ENCODE measurements at regions of chr13 and their contacts with region 1.

Region 1: DNA sequence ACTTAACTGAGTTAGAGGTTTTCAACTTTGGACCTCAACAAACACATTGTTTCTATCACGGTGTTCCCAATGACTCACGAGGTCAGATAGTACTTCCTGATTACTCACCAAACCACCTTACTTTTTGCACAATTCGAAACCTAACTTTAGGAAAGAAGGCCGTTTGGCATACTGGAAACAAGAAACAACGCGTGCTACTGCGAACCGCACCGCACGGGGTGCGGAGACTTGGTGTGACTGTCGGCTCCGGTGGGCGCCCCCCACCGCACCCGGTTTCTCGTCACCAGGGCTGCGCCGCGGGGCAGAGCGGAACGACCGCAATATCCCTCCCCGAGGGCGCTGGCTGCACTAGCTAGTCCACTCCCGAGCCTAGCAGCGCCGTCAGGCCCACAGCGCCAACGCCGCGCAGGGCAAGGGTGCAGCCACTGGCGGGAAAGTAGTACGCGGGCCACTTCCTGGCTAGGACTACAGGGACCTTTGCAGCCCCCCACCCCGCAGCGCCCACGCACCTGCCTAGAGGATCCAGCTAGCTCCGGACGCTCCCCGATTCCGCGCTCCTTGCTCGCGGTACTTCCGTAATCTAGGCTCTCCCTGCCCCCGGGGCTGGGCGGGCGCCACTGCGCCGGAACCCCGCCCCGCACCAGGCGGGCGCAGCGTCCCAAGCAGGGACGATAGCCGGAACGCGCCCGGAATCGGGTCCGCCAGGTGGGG is at the start of gene PARP4:
- DNase-seq: peak; percentile 88
- H3K4me3 ChIP-seq: peak within 1 kb of the TSS; percentile 56 to 93 (median 80)
- H3K27ac ChIP-seq: peak within 1 kb of the TSS; percentile 94 to 99 (median 96)
- H3K4me1 ChIP-seq: peaks cover 6 to 36% (median 23%) of the 10 kb centered on the region in 4 donors
- H3K27me3 ChIP-seq: no peaks in the 10 kb centered on the region
- CTCF ChIP-seq: no peak
- EP300 ChIP-seq: no peak
- POLR2A ChIP-seq: peak; percentile 96
- total RNA-seq, gene PARP4: 120 to 176 (median 147) TPM

Region 2: DNA sequence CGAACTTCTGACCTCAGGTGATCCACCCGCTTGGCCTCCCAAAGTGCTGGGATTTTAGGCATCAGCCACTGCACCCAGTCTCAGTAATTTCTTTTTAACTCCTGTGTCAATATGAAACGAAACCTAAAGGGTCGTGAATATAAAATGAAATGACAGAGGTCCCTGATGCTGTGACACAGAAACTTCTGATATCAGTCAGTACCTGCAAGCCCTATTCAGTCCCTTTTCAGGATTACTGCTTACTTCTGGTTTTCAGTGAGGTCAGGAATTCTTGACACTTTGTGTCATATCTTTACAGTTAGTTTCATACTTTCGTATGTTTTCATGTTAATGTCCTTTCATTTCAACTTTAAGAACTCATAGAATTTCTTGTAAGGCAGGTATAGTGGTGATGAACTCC is 310.3 kb after region 1 on chr13:
- in situ Hi-C with region 1: no loop called
- intact Hi-C with region 1: no loop called
- DNase-seq: no peak
- H3K4me3 ChIP-seq: no peak overlapping the region
- H3K27ac ChIP-seq: no peak overlapping the region
- H3K4me1 ChIP-seq: no peaks in the 10 kb centered on the region
- H3K27me3 ChIP-seq: no peaks in the 10 kb centered on the region
- CTCF ChIP-seq: no peak
- EP300 ChIP-seq: no peak
- POLR2A ChIP-seq: no peak

Region 3: DNA sequence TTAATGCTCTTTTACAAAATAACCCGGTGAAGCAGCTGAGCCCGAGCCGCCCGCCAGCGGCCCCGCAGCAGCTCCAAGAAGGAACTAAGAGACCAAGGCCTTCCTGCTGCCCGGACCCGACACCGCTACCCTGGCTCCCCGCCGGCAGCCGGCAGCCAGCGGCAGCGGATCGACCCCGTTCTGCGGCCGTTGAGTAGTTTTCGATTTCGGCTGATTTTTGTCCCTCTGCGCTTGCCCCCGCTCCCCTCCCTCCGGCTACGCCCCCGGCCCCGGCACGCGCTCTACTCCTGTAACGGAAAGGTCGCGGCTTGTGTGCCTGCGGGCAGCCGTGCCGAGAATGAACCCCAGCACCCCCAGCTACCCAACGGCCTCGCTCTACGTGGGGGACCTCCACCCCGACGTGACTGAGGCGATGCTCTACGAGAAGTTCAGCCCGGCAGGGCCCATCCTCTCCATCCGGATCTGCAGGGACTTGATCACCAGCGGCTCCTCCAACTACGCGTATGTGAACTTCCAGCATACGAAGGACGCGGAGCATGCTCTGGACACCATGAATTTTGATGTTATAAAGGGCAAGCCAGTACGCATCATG is 583.6 kb after region 1 on chr13 and contains the start of gene PABPC3:
- in situ Hi-C with region 1: no loop called
- intact Hi-C with region 1: no loop called
- DNase-seq: no peak
- H3K4me3 ChIP-seq: peak within 1 kb of the TSS in 1 of 4 donors; percentile 7
- H3K27ac ChIP-seq: no peak within 1 kb of the TSS
- H3K4me1 ChIP-seq: no peaks in the 10 kb centered on the region
- H3K27me3 ChIP-seq: peaks cover 20% of the 10 kb centered on the region
- CTCF ChIP-seq: no peak
- EP300 ChIP-seq: no peak
- POLR2A ChIP-seq: no peak
- total RNA-seq, gene PABPC3: 0.14 to 0.20 TPM in 2 of 4 donors, not detected in the others

Region 4: GRCh38 chr13:25301347-25302047 is 789.1 kb after region 1 on chr13 and contains the start of gene NUP58:
- in situ Hi-C with region 1: no loop called
- intact Hi-C with region 1: loop called (anchors 10 kb)
- DNase-seq: peak; percentile 96
- H3K4me3 ChIP-seq: peak within 1 kb of the TSS; percentile 68 to 88 (median 83)
- H3K27ac ChIP-seq: peak within 1 kb of the TSS; percentile 91 to 96 (median 94)
- H3K4me1 ChIP-seq: peaks cover 0 to 27% (median 13%) of the 10 kb centered on the region in 4 donors
- H3K27me3 ChIP-seq: peaks cover 15% of the 10 kb centered on the region
- CTCF ChIP-seq: no peak
- EP300 ChIP-seq: no peak
- POLR2A ChIP-seq: peak; percentile 83
- total RNA-seq, gene NUP58: 33.0 to 142 (median 84.2) TPM